ENCODE measurements at regions of chr12 and their contacts with region 1.

Region 1: GRCh38 chr12:127588249-127588648 is 678.7 kb upstream of the TMEM132C start:
- DNase-seq: peak in 1 of 2 donors; percentile 69
- ATAC-seq: peak; percentile 85
- H3K4me3 ChIP-seq: peak overlapping the region in 1 of 2 donors; percentile 41
- H3K27ac ChIP-seq: peak overlapping the region in 1 of 2 donors; percentile 75
- H3K4me1 ChIP-seq: peaks cover 0 to 5% of the 10 kb centered on the region in 2 donors
- H3K27me3 ChIP-seq: no peaks in the 10 kb centered on the region

Region 2: GRCh38 chr12:127619869-127620734 is 31.9 kb after region 1 on chr12:
- intact Hi-C with region 1: loop called in 1 of 2 experiments (anchors 2 kb)
- DNase-seq: peak in 1 of 2 donors; percentile 74
- ATAC-seq: peak; percentile 63
- H3K4me3 ChIP-seq: no peak overlapping the region
- H3K27ac ChIP-seq: peak overlapping the region; percentile 73 to 90
- H3K4me1 ChIP-seq: peaks cover 2 to 3% of the 10 kb centered on the region in 2 donors
- H3K27me3 ChIP-seq: no peaks in the 10 kb centered on the region

Region 3: GRCh38 chr12:127640181-127640886 is 52.1 kb after region 1 on chr12:
- intact Hi-C with region 1: loop called in 1 of 2 experiments (anchors 1 kb)
- DNase-seq: peak in 1 of 2 donors; percentile 70
- ATAC-seq: peak; percentile 89
- H3K4me3 ChIP-seq: no peak overlapping the region
- H3K27ac ChIP-seq: peak overlapping the region; percentile 47 to 88
- H3K4me1 ChIP-seq: no peaks in the 10 kb centered on the region
- H3K27me3 ChIP-seq: no peaks in the 10 kb centered on the region

Region 4: GRCh38 chr12:127675936-127676335 is 87.7 kb after region 1 on chr12:
- intact Hi-C with region 1: no loop called
- DNase-seq: no peak
- ATAC-seq: no peak
- H3K4me3 ChIP-seq: no peak overlapping the region
- H3K27ac ChIP-seq: no peak overlapping the region
- H3K4me1 ChIP-seq: no peaks in the 10 kb centered on the region
- H3K27me3 ChIP-seq: no peaks in the 10 kb centered on the region